ENCODE measurements at regions of chr6 and their contacts with region 1.

Region 1: GRCh38 chr6:106141441-106142237 is 55.5 kb downstream of the PRDM1 start:
- DNase-seq: peak; percentile 75
- H3K4me3 Mint-ChIP-seq: peak overlapping the region; percentile 13
- H3K27ac Mint-ChIP-seq: peak overlapping the region; percentile 83
- H3K4me1 Mint-ChIP-seq: peaks cover 31% of the 10 kb centered on the region
- H3K27me3 Mint-ChIP-seq: no peaks in the 10 kb centered on the region

Region 2: DNA sequence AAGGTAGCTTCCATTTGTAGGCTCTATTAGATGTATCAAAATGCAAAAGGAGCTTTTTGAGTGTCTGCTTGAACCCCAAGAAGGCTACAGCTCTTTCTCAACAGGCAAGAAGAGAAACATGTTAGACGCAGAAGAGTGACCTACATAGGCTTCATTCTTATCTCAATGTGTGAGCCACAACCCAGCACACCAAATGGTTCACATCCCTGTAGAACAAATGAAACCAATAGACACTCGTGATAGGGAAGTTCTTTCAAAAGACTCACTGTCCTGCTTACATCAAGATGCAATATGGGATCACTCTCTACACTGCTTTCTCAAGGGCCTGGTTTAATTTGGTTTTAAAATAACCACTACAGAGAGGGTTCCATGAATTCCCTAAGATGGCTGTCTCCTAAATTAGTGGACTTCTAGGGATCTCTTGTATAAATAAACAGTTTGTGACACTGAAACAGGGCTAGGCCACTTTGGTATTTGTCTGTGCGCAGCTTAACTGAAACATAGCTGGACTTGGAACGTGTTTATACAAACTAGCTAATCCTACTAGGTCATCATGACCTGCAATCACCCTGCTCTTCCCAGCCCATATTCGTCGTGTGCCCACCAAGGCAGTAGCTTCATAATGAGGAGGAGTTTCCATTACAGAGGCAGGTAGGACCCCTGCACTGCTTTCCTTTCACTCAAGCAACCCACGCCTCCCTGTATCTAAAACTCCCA is 513.3 kb before region 1 on chr6:
- CTCF ChIA-PET with region 1: no interaction called
- intact Hi-C with region 1: no loop called
- DNase-seq: no peak
- H3K4me3 Mint-ChIP-seq: no peak overlapping the region
- H3K27ac Mint-ChIP-seq: no peak overlapping the region
- H3K4me1 Mint-ChIP-seq: peaks cover 11% of the 10 kb centered on the region
- H3K27me3 Mint-ChIP-seq: peaks cover 14% of the 10 kb centered on the region

Region 3: DNA sequence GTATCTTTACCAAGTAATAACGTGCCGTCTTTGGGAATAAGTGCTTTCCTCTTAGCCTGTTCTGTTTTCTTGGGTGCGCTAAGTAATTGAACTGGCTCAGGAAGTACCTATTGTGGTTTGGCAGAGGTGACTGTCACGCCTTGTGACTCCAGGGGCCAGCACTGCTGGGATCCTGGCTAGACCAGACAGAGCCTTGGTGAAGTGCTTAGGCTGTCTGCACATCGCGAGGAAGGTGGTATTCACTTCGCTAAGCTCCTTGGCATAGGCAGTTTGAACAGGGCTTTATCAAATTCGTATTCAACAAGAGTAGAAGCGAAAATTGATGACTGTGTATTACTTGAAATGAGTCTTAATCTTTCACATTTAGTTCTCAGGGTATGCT is 37.9 kb before region 1 on chr6:
- CTCF ChIA-PET with region 1: no interaction called
- intact Hi-C with region 1: loop called (anchors 1 kb)
- DNase-seq: peak; percentile 63
- H3K4me3 Mint-ChIP-seq: peak overlapping the region; percentile 20
- H3K27ac Mint-ChIP-seq: peak overlapping the region; percentile 1
- H3K4me1 Mint-ChIP-seq: peaks cover 57% of the 10 kb centered on the region
- H3K27me3 Mint-ChIP-seq: peaks cover 4% of the 10 kb centered on the region

Measured in activated naive CD4-positive, alpha-beta T cell treated with anti-CD3 and anti-CD28 coated beads for 36 hours (primary cell).